Activated CD4-positive, alpha-beta T cell treated with anti-CD3 and anti-CD28 coated beads for 36 hours (primary cell): ENCODE measurements at regions of chr19 and their contacts with region 1.

Region 1: GRCh38 chr19:5577785-5578493 is 10.2 kb upstream of the TINCR start:
- DNase-seq: peak; percentile 85
- ATAC-seq: peak; percentile 89
- H3K4me3 Mint-ChIP-seq: no peak overlapping the region
- H3K27ac Mint-ChIP-seq: no peak overlapping the region
- H3K4me1 Mint-ChIP-seq: peaks cover 8% of the 10 kb centered on the region
- H3K27me3 Mint-ChIP-seq: no peaks in the 10 kb centered on the region

Region 2: GRCh38 chr19:4851551-4852290 is 726.2 kb before region 1 on chr19:
- CTCF ChIA-PET with region 1: no interaction called
- POLR2A ChIA-PET with region 1: no interaction called
- intact Hi-C with region 1: no loop called
- DNase-seq: peak; percentile 86
- ATAC-seq: peak; percentile 89
- H3K4me3 Mint-ChIP-seq: no peak overlapping the region
- H3K27ac Mint-ChIP-seq: no peak overlapping the region
- H3K4me1 Mint-ChIP-seq: peaks cover 2% of the 10 kb centered on the region
- H3K27me3 Mint-ChIP-seq: no peaks in the 10 kb centered on the region

Region 3: GRCh38 chr19:5048091-5048726 is 529.7 kb before region 1 on chr19:
- CTCF ChIA-PET with region 1: no interaction called
- POLR2A ChIA-PET with region 1: no interaction called
- intact Hi-C with region 1: loop called in 1 of 2 experiments (anchors 2 kb)
- DNase-seq: peak; percentile 80
- ATAC-seq: peak; percentile 92
- H3K4me3 Mint-ChIP-seq: no peak overlapping the region
- H3K27ac Mint-ChIP-seq: no peak overlapping the region
- H3K4me1 Mint-ChIP-seq: peaks cover 2% of the 10 kb centered on the region
- H3K27me3 Mint-ChIP-seq: no peaks in the 10 kb centered on the region

Region 4: GRCh38 chr19:5225486-5226345 is 352.2 kb before region 1 on chr19:
- CTCF ChIA-PET with region 1: no interaction called
- POLR2A ChIA-PET with region 1: no interaction called
- intact Hi-C with region 1: loop called in 1 of 2 experiments (anchors 10 kb)
- DNase-seq: peak; percentile 51
- ATAC-seq: peak; percentile 26
- H3K4me3 Mint-ChIP-seq: no peak overlapping the region
- H3K27ac Mint-ChIP-seq: no peak overlapping the region
- H3K4me1 Mint-ChIP-seq: no peaks in the 10 kb centered on the region
- H3K27me3 Mint-ChIP-seq: peaks cover 18% of the 10 kb centered on the region

Region 5: DNA sequence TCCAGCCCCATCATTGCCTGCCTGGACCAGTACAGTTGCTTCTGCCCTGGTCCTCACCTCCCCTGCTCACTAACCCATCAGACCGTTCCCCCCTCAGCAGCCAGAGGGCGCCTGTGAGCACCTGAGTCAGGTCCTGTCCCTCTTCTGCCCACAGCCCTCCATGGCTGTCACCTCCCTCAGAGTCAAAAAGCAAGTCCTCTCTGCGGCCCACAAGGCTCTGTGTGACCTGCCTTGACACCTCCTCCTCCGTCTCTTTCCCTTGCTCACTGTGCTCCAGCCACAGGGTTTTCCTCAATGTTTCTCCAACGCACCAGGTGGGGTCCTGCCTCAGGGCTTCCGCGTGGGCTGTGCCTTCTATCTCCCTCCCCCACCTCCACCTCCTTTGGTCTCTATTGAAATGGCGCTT is 208.0 kb before region 1 on chr19:
- CTCF ChIA-PET with region 1: no interaction called
- POLR2A ChIA-PET with region 1: no interaction called
- intact Hi-C with region 1: loop called in 1 of 2 experiments (anchors 1 kb)
- DNase-seq: peak; percentile 84
- ATAC-seq: peak; percentile 76
- H3K4me3 Mint-ChIP-seq: no peak overlapping the region
- H3K27ac Mint-ChIP-seq: no peak overlapping the region
- H3K4me1 Mint-ChIP-seq: no peaks in the 10 kb centered on the region
- H3K27me3 Mint-ChIP-seq: peaks cover 5% of the 10 kb centered on the region

Region 6: DNA sequence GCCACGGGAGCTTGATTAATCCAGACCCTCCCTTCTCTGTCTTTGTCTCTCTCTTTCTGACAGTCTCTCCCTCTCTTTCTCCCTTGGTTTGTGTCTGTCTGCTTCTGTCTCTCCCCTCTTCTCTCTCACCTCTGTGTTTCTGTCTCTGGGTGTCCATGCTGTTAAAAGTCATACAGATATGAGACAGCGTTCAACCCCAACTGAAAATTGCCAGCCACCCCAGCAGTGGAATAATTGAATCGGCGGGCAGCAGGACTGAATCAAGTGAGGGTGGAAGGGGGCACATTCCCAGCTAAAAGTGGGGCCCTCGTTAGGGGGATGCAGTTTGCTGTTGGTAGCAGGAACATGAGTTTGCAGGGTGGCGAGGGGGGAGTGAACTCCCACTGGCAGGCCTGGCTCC is 53.9 kb before region 1 on chr19:
- CTCF ChIA-PET with region 1: interaction called, 3 read pairs
- POLR2A ChIA-PET with region 1: no interaction called
- intact Hi-C with region 1: loop called in 1 of 2 experiments (anchors 1 kb)
- DNase-seq: no peak
- ATAC-seq: no peak
- H3K4me3 Mint-ChIP-seq: no peak overlapping the region
- H3K27ac Mint-ChIP-seq: no peak overlapping the region
- H3K4me1 Mint-ChIP-seq: no peaks in the 10 kb centered on the region
- H3K27me3 Mint-ChIP-seq: peaks cover 34% of the 10 kb centered on the region

Region 7: GRCh38 chr19:5547881-5548280 is 30.1 kb before region 1 on chr19:
- CTCF ChIA-PET with region 1: no interaction called
- POLR2A ChIA-PET with region 1: no interaction called
- intact Hi-C with region 1: loop called in 1 of 2 experiments (anchors 2 kb)
- DNase-seq: peak; percentile 45
- ATAC-seq: no peak
- H3K4me3 Mint-ChIP-seq: no peak overlapping the region
- H3K27ac Mint-ChIP-seq: no peak overlapping the region
- H3K4me1 Mint-ChIP-seq: no peaks in the 10 kb centered on the region
- H3K27me3 Mint-ChIP-seq: peaks cover 12% of the 10 kb centered on the region